ENCODE measurements at regions of chr9 and their contacts with region 1.

Region 1: DNA sequence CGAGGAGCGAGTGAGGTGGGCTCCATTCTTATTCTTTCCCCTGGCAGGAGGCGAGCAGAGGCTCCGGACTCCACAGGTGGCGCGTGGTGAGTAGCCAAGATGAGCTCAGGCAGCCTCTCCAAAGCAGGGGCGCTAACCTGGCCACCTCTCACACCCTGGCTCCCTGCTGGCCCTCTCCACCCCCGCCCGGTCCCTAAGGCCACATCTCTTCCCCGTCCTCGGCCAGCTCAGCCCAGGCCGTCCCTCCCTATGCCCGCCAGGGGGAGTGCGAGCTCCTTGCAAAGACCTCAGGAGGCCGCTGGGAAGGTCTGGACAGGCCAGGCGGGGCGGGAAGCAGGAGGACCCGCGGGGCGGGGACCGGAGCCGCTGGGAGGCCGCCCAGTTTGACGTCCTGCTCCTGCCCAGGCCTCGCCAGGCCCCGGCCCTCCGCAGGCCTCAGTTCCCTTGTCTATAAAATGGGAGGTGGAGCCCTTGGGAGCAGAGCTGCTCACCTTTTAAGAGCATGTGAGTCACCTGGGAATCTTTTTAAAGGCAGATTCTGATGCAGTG is 46.3 kb upstream of the GGTA1 start:
- DNase-seq: peak; percentile 91 to 96
- ATAC-seq: peak; percentile 94 to 98
- H3K4me3 ChIP-seq: peak overlapping the region; percentile 26; the same call in 2 of the 3 replicates
- H3K27ac ChIP-seq: peak overlapping the region; percentile 76 to 85
- H3K4me1 ChIP-seq: peaks cover 11% of the 10 kb centered on the region; the same call in 2 of the 3 replicates
- CTCF ChIP-seq: peak; percentile 90
- EP300 ChIP-seq: no peak
- POLR2A ChIP-seq: peak; percentile 25; the same call in 1 of the 2 replicates
- RAD21 ChIP-seq: peak; percentile 95 to 96

Region 2: DNA sequence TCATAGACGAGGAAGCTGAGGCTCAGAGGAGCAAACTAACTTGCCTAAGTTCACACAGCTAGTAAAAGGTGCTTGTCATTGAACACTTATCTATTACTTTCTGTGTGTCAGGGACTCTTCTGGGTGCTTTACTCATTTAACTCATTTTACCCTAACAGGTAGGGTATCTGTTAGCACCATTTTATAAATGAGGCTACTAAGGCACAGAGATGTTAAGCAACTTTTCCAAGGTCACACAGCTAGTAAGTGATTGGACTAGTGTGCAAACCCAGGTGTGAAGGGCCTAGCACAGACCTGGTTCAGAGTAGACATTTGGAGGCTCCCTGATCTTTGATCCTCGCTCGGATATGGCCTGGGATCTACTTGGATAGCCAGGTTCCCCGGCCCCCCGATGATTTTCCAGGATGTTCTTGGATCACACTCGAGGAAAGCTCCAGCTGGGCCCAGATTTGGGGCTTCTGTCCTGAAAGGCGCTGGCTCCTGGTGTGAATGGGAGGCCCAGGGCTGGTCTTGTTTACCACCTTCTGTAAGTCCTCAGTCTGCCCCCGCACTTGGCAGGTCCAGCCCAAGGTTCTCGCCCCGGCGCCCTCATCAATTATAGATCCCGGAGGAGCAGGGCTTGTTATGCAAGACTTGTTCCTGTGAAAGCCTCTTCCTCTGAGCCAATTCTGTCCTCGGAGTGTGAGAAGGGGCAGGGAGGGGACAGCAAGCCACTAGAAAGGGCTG is 240.5 kb before region 1 on chr9:
- CTCF ChIA-PET with region 1: no interaction called
- POLR2A ChIA-PET with region 1: no interaction called
- DNase-seq: no peak
- ATAC-seq: no peak
- H3K4me3 ChIP-seq: no peak overlapping the region
- H3K27ac ChIP-seq: peak overlapping the region in 1 of 2 experiments; percentile 30; a peak in 2 of 6 replicates
- H3K4me1 ChIP-seq: peaks cover 20% of the 10 kb centered on the region
- CTCF ChIP-seq: no peak
- EP300 ChIP-seq: no peak
- POLR2A ChIP-seq: no peak
- RAD21 ChIP-seq: no peak

Region 3: GRCh38 chr9:121326130-121326838 is 219.7 kb before region 1 on chr9:
- CTCF ChIA-PET with region 1: no interaction called
- POLR2A ChIA-PET with region 1: no interaction called
- DNase-seq: peak in 1 of 2 experiments; percentile 88
- ATAC-seq: peak; percentile 38 to 65; a peak in 5 of 6 replicates
- H3K4me3 ChIP-seq: no peak overlapping the region
- H3K27ac ChIP-seq: peak overlapping the region; percentile 90 to 92
- H3K4me1 ChIP-seq: peaks cover 61% of the 10 kb centered on the region
- CTCF ChIP-seq: no peak
- EP300 ChIP-seq: peak in 1 of 2 experiments; percentile 24; a peak in 1 of 5 replicates
- POLR2A ChIP-seq: no peak
- RAD21 ChIP-seq: no peak

Region 4: DNA sequence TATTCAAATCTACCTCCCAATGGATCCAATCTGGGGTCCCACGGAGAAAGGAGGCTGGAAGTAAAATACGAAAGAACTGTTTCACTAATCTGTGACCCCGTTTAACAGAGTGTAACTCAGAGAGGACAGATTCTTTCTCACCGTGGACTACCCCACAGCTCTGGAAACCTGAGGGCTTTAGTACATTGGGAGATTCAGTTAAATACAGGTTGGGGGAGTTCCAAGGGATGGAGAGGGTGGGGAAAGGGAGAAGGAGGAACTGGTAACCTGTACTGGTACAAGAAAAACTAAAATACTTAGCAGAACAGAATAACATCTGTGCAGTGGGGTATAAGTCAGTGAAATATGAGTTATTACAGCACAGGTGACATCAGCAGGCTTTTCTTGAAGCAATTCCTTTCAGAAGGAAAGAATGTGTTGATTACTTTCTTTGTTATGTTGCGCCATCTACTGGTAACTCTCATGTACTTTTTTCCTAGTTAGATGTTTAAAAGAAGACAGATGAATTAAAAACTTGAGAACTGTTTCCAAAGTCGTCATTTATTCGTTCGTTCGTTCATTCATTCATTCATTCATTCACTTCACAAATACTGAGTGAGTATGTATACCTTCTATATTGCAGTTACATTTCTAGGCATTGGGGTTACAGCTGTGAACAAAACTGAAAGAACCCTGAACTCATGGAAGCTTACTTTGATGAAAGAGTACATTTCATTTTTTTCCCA is 145.9 kb before region 1 on chr9:
- CTCF ChIA-PET with region 1: no interaction called
- POLR2A ChIA-PET with region 1: no interaction called
- DNase-seq: peak; percentile 40 to 80
- ATAC-seq: peak; percentile 82 to 89
- H3K4me3 ChIP-seq: no peak overlapping the region
- H3K27ac ChIP-seq: peak overlapping the region; percentile 39 to 55; a peak in 5 of 6 replicates
- H3K4me1 ChIP-seq: peaks cover 8% of the 10 kb centered on the region; the same call in 2 of the 3 replicates
- CTCF ChIP-seq: peak; percentile 86
- EP300 ChIP-seq: no peak
- POLR2A ChIP-seq: no peak
- RAD21 ChIP-seq: peak; percentile 89 to 92

Region 5: DNA sequence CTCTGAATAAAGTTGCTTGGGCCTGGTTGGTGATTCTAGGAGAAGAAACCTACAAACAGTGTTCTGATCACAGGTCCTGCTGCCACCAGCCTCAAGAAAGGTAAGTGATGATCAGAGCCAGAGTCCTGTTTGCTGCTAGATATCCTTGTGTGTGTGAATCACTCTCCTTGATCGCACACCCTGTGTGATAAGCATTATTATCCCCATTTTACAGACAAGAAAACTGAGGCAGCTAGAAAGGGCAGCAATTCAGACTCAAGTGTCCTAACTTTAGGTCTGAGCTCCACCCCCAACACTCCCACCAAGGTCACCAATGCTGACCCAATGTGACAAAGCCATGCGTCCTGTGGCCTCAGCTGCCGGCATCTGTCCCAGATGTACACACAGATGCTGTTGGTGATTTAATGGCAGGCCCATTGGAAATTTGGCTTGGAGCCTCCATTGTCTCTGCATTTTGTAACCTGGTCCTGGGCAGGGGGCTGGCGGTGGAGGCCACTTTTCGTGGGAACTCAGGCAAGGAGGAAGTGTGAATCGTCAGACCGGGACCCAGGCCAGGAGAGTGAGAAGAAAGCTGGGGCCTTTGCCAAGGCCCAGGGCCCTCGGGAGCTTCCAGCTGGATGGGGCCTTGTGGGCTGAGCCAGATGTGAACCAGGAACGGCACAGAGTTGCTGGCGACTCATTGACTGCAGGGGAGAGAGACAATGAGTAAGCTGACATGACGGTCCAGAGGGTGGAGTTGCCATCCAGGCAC is 16.5 kb before region 1 on chr9:
- CTCF ChIA-PET with region 1: interaction called, 20 read pairs
- POLR2A ChIA-PET with region 1: no interaction called
- DNase-seq: peak in 1 of 2 experiments; percentile 42
- ATAC-seq: peak; percentile 74 to 80; a peak in 5 of 6 replicates
- H3K4me3 ChIP-seq: no peak overlapping the region
- H3K27ac ChIP-seq: 0 out of 6 replicates have a peak overlapping the region, but pooled peaks of 1 of the 2 experiments have one; percentile 4
- H3K4me1 ChIP-seq: no peaks in the 10 kb centered on the region
- CTCF ChIP-seq: no peak
- EP300 ChIP-seq: no peak
- POLR2A ChIP-seq: no peak
- RAD21 ChIP-seq: no peak

Region 6: GRCh38 chr9:121573717-121574485 is 28.0 kb after region 1 on chr9:
- CTCF ChIA-PET with region 1: interaction called, 22 read pairs
- POLR2A ChIA-PET with region 1: no interaction called
- DNase-seq: no peak
- ATAC-seq: no peak
- H3K4me3 ChIP-seq: no peak overlapping the region
- H3K27ac ChIP-seq: no peak overlapping the region
- H3K4me1 ChIP-seq: no peaks in the 10 kb centered on the region
- CTCF ChIP-seq: no peak
- EP300 ChIP-seq: no peak
- POLR2A ChIP-seq: no peak
- RAD21 ChIP-seq: no peak

Region 7: DNA sequence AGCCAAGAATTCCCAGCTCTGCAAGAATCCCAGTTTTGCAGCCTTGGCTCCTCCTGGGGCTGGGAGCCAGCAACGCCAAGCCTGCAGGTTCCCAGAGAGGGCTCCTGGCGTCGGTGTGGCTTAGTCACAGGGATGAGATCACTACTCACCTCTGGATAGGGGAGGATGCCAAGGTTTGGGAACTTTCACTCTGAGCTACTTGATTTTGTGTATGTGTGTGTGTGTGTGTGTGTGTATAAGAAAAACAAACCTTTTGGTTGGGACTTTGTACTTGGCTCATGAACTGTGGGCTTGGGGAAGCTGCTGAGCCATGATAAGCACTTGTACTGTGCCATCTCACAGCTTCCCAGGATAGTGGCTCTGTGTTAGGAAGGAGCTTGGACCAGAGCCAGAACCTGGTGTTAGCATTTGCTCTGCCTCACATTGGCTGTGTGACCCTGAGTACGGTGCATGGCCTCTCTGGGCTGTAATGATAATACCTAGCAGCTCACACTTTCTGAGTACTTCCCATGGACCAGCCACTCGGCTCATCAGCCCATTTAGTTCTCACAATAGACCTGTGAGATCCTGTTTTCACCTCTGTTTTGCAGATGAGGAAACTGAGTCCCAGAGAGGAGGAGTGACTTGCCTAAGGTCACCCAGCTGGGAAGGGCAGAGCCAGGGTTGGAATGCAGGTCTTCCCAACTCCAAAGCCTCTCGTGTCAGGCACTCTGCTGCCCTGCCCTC is 64.1 kb after region 1 on chr9:
- CTCF ChIA-PET with region 1: interaction called, 20 read pairs
- POLR2A ChIA-PET with region 1: no interaction called
- DNase-seq: peak; percentile 80 to 83
- ATAC-seq: peak; percentile 89 to 93
- H3K4me3 ChIP-seq: no peak overlapping the region
- H3K27ac ChIP-seq: peak overlapping the region in 1 of 2 experiments; percentile 20; a peak in 3 of 6 replicates
- H3K4me1 ChIP-seq: peaks cover 41% of the 10 kb centered on the region
- CTCF ChIP-seq: no peak
- EP300 ChIP-seq: no peak
- POLR2A ChIP-seq: no peak
- RAD21 ChIP-seq: no peak

Region 8: DNA sequence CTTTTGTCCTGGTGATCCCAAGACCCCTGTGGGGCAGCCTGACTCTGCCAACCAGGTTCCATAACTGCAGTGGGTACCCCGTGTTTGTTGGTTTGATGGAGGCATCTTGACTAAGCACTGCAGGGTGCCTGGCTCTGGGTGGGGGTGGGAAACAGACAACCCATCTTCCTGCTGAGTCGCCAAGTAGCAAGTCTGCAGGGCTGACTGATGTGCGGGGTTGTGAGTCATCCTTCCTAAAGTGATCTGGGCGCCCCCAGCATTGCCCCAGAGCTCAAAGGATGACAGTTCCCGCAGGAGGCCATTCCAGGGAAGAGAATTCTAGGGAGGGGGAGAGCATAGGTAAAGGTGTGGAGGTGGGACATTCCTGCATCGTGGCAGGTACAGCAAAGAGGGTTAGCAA is 129.0 kb after region 1 on chr9:
- CTCF ChIA-PET with region 1: interaction called, 51 read pairs
- POLR2A ChIA-PET with region 1: no interaction called
- DNase-seq: no peak
- ATAC-seq: peak in 1 of 2 experiments; percentile 41; a peak in 4 of 6 replicates
- H3K4me3 ChIP-seq: no peak overlapping the region
- H3K27ac ChIP-seq: peak overlapping the region in 1 of 2 experiments; percentile 53; a peak in 3 of 6 replicates
- H3K4me1 ChIP-seq: peaks cover 17% of the 10 kb centered on the region; the same call in 2 of the 3 replicates
- CTCF ChIP-seq: no peak
- EP300 ChIP-seq: no peak
- POLR2A ChIP-seq: no peak
- RAD21 ChIP-seq: no peak

Region 9: DNA sequence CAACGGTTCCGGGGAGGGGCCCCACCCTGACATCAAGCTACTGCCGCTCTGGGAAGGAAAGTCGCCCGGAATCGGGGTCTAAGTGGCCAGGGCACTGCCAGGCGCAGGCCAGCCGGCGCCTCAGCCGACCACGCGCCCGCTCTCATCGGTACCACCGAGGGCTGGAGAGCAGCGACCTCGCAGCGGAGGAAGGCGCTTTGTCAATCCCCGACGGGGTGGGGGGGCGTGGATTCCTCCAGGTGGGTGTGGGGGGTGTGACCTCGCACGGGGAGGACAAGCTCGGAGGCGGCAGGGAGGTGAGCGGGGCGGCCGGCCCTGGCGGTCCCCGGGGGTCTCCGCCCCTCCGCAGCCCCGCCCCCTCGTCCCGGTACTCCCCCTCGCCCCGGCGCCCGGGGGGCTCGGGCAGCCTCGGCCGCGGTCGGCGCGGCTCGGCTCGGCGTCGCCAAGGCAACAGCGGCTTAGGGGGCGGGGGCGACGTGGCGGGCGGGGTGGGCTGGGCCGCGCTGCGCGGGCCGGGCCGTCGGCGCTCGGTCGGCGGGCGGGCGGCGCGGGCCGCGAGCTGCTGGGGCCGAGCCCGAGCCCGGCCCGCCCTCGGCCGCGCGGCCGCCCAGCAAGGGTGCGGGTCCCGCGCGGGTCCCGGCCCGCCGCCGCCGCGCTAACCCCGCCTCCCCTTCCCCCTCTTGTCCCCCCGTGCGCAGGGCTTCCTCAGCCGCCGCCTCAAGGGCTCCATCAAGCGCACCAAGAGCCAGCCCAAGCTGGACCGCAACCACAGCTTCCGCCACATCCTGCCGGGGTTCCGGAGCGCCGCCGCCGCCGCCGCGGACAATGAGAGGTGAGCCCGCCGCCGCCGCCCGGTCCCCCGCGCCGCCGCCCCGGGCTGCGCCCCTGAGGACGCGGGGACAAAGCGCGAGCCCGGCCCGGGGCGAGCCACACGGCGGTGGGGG is 152.9 kb after region 1 on chr9:
- CTCF ChIA-PET with region 1: interaction called, 30 read pairs
- POLR2A ChIA-PET with region 1: no interaction called
- DNase-seq: no peak
- ATAC-seq: peak; percentile 13 to 61; a peak in 5 of 6 replicates
- H3K4me3 ChIP-seq: peak overlapping the region; percentile 55
- H3K27ac ChIP-seq: peak overlapping the region; percentile 66 to 94
- H3K4me1 ChIP-seq: peaks cover 8% of the 10 kb centered on the region; the same call in 1 of the 3 replicates
- CTCF ChIP-seq: no peak
- EP300 ChIP-seq: no peak
- POLR2A ChIP-seq: no peak
- RAD21 ChIP-seq: no peak

Region 10: DNA sequence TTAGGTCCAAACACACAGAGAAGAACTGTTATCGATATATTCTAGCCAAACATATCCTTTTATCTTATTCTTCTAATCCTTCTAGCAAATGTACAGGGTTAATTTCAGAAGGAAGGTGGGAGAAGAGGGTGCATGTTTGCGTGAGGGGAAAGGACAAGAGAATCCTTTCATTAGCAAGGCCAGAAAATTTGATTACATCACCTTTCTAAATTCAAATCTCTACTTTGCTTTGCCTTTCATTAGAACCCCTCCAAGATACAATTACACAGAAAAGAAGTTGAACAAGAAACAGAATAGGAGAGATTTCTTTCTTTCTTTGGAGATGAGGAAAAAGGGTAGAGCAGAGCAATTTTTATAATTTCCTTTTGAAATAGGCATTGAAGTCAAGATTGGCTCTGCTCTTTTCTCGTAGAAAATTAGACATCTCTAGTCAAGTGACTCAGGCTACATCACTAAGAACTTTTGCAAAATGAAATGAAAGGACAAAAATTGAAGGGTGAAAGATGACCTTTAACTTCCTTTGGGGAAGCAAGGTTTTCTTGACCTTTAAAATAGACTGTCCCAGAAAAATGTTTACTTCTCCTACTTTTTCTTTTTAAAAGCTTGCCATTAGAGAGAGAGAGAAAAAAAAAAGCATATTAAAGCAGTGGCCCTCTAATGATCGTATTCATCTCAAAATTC is 466.0 kb after region 1 on chr9:
- CTCF ChIA-PET with region 1: interaction called, 17 read pairs
- POLR2A ChIA-PET with region 1: no interaction called
- DNase-seq: no peak
- ATAC-seq: no peak
- H3K4me3 ChIP-seq: no peak overlapping the region
- H3K27ac ChIP-seq: no peak overlapping the region
- H3K4me1 ChIP-seq: no peaks in the 10 kb centered on the region
- CTCF ChIP-seq: no peak
- EP300 ChIP-seq: no peak
- POLR2A ChIP-seq: no peak
- RAD21 ChIP-seq: no peak